ENCODE measurements at regions of chr9 and their contacts with region 1.

Region 1: DNA sequence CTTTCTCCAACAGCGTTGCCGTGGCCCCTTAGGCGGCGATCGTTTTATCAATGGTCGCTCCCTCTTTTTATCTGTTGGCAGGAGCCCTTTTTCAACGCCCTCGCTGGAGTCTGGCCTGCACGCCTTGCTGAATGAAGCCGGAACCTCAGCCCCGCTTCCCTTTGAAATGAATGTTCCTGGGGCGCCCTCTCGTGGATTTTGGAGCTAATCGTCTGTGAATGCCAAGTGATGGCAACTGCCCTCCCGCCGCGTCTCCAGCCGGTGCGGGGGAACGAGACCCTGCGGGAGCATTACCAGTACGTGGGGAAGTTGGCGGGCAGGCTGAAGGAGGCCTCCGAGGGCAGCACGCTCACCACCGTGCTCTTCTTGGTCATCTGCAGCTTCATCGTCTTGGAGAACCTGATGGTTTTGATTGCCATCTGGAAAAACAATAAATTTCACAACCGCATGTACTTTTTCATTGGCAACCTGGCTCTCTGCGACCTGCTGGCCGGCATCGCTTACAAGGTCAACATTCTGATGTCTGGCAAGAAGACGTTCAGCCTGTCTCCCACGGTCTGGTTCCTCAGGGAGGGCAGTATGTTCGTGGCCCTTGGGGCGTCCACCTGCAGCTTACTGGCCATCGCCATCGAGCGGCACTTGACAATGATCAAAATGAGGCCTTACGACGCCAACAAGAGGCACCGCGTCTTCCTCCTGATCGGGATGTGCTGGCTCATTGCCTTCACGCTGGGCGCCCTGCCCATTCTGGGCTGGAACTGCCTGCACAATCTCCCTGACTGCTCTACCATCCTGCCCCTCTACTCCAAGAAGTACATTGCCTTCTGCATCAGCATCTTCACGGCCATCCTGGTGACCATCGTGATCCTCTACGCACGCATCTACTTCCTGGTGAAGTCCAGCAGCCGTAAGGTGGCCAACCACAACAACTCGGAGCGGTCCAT is 10.0 kb downstream of the S1PR3 start:
- DNase-seq: no peak
- H3K4me3 ChIP-seq: peak overlapping the region in 1 of 4 donors; percentile 49
- H3K27ac ChIP-seq: peak overlapping the region; percentile 3 to 72 (median 56)
- H3K4me1 ChIP-seq: peaks cover 14 to 52% (median 16%) of the 10 kb centered on the region in 3 donors
- H3K27me3 ChIP-seq: peaks cover 0 to 11% (median 0%) of the 10 kb centered on the region in 4 donors
- CTCF ChIP-seq: peak; percentile 65 to 85 (median 75)
- POLR2A ChIP-seq: no peak

Region 2: DNA sequence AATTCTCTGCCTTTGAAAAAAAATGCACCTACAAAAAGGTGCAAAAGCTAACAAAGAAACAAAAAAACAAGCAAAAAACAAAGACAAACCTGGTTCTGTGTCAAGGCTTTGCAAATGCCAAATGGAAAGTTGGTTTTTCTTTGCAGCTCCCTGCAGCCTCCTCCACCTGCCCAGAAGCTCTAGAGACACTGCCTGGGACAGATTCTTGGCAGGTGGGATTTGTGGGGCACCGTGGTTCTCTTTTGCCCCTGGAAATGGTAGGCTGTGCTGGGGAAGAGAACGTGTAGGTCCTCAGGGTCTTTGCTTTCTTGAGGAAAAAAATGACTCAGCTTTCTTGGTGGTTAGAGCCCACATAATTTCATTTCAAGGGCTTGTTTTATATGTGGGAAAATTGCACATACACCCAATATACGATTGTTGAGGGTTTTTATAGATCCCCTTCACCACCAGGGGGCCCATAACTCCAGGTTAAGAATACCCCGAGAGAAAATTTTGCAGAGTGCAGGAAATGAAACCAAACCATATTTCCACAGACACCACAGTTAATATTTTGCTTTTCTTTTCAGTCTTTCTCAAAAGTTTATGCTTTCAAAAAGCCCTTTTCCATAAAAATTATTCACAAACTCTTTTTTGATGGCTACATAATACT is 407.6 kb before region 1 on chr9:
- intact Hi-C with region 1: loop called (anchors 5 kb)
- DNase-seq: no peak
- H3K4me3 ChIP-seq: no peak overlapping the region
- H3K27ac ChIP-seq: no peak overlapping the region
- H3K4me1 ChIP-seq: no peaks in the 10 kb centered on the region
- H3K27me3 ChIP-seq: peaks cover 0 to 15% (median 0%) of the 10 kb centered on the region in 4 donors
- CTCF ChIP-seq: peak; percentile 24 to 78 (median 63)
- POLR2A ChIP-seq: no peak

Region 3: GRCh38 chr9:89278997-89279739 is 277.9 kb after region 1 on chr9:
- intact Hi-C with region 1: loop called (anchors 10 kb)
- DNase-seq: no peak
- H3K4me3 ChIP-seq: no peak overlapping the region
- H3K27ac ChIP-seq: no peak overlapping the region
- H3K4me1 ChIP-seq: peaks cover 0 to 19% (median 4%) of the 10 kb centered on the region in 3 donors
- H3K27me3 ChIP-seq: no peaks in the 10 kb centered on the region
- CTCF ChIP-seq: peak; percentile 33 to 78 (median 62)
- POLR2A ChIP-seq: no peak